ENCODE measurements at regions of chr12 and their contacts with region 1.

Region 1: DNA sequence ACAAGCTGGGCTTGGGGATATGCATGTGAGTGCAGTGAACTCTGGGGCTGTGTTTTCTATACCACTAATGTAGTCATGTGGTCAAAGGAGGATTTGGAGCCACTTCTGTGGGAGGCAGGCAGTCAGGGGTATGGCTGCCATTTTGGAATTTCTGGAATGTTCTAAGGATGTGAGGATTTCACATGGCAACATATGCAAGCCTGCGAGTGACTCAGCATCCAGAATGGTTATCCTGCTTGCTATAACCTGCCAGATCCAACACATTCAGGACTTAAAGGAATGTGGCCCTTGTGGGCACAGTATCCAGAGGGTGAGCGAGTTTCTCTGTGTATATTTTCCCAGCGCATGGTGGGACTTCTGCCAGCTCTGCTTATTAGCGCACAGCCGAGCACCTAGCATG is 249.2 kb upstream of the PWP1 start:
- DNase-seq: no peak
- CTCF ChIP-seq: no peak

Region 2: GRCh38 chr12:107372229-107372658 is 64.1 kb before region 1 on chr12:
- CTCF ChIA-PET with region 1: no interaction called
- POLR2A ChIA-PET with region 1: interaction called, 11 read pairs
- DNase-seq: no peak
- CTCF ChIP-seq: no peak

Measured in GM10248 (cell line).